ENCODE measurements at regions of chr2 and their contacts with region 1.

Region 1: DNA sequence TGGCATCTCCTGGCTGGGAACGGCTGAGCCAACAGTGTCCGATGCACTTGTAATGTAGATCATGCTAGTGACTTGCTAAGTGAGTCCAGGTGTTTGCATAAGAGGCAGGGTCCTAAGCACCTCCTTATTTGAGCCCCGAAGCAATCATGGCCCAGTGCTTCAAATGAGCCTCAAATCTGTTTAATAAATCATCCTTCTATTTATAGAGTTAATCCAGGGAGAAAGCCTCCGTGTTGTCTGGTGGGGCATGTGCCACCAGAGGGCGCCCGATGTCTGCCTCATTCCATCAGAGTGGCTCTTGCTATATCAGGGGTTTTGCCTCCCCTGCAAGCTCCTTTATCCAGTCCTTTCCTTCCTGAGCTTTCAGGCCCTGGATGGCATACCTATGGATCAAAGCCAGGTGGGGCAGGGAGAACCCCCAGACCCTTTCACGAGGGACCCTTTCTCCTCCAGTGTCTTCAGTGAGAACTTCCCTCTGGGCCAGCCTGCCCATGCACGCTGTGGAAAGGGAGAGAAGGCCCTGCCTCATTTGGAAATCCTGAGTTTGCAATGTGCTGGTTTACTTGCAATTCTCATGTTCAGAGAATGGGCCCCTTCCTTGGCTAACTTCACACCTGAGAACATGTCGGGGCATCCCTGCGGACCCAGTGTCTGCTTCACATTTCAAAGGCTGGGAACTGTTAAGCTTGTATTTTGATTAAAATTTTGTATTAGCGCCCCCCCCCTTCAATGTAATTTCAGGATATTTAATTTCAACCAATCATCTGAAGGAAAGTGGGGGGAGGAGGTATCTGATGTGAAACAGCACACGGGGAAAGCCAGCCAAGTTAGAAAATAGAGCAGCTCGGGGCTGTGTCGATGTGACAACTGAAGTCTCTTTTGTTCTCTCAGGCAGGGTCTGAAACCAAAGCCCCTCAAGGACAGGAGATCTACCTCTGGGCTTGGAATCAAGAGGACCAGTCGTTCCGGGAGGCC is 39.7 kb downstream of the RDH14 start:
- DNase-seq: peak; percentile 49 to 81
- ATAC-seq: peak; percentile 85 to 96
- H3K4me3 ChIP-seq: peak overlapping the region in 2 of 4 donors; percentile 4 to 26
- H3K27ac ChIP-seq: peak overlapping the region; percentile 13 to 52 (median 38)
- H3K4me1 ChIP-seq: peaks cover 14 to 39% of the 10 kb centered on the region in 2 donors
- H3K27me3 ChIP-seq: no peaks in the 10 kb centered on the region
- CTCF ChIP-seq: peak; percentile 76 to 90 (median 88)
- POLR2A ChIP-seq: no peak

Region 2: GRCh38 chr2:18398833-18399232 is 121.9 kb before region 1 on chr2:
- in situ Hi-C with region 1: no loop called
- intact Hi-C with region 1: no loop called
- DNase-seq: peak; percentile 20 to 54
- ATAC-seq: peak; percentile 58 to 61
- H3K4me3 ChIP-seq: no peak overlapping the region
- H3K27ac ChIP-seq: no peak overlapping the region
- H3K4me1 ChIP-seq: no peaks in the 10 kb centered on the region
- H3K27me3 ChIP-seq: no peaks in the 10 kb centered on the region
- CTCF ChIP-seq: no peak
- POLR2A ChIP-seq: no peak

Region 3: DNA sequence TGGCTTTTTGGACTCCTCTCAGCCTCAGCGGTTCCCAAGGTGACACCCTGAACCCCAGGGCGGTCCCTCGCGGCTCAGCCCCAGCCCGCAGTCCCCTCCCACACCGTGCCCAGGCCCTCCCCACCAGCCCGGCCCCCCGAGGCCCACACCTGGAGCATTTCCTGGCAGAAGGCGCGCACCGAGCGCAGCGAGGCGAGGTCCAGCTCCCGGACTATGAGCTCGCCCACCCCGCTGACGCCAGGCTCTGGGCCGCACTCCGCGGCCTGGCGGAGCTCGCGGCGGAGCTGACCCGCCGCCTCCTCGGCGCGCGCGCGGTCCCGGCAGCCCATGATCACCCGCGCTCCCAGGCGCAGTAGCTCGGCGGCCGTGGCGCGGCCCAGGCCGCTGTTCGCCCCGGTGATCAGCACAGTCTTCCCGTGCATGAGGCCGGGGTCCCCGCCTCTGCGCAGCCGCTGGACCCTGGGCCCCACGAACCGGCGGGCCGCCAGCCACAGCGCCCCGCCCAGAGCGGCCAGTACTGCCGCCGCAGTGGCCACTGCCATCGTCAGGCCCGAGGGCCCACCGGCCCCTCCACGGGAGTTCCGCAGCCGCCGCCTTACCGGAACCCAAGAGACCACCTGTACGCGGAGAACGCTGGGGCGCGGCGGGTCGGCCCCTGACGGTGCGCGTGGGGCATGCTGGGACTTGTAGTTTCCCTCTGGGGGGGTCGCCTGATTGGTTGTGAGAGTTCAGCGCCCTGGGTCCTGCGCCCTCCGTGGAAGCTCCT is 39.5 kb after region 1 on chr2 and contains the start of gene RDH14:
- in situ Hi-C with region 1: no loop called
- intact Hi-C with region 1: loop called (anchors 2 kb)
- DNase-seq: peak; percentile 94 to 96
- ATAC-seq: peak; percentile 94 to 96
- H3K4me3 ChIP-seq: peak within 1 kb of the TSS; percentile 65 to 83 (median 74)
- H3K27ac ChIP-seq: peak within 1 kb of the TSS; percentile 89 to 97 (median 92)
- H3K4me1 ChIP-seq: peaks cover 39 to 42% of the 10 kb centered on the region in 2 donors
- H3K27me3 ChIP-seq: no peaks in the 10 kb centered on the region
- CTCF ChIP-seq: no peak
- POLR2A ChIP-seq: peak; percentile 81 to 84
- total RNA-seq, gene RDH14: 24.6 to 55.4 (median 49.8) TPM

Region 4: GRCh38 chr2:18749912-18750526 is 229.3 kb after region 1 on chr2:
- in situ Hi-C with region 1: no loop called
- intact Hi-C with region 1: loop called (anchors 10 kb)
- DNase-seq: no peak
- ATAC-seq: peak; percentile 41 to 69
- H3K4me3 ChIP-seq: no peak overlapping the region
- H3K27ac ChIP-seq: peak overlapping the region in 3 of 4 donors; percentile 17 to 47 (median 28)
- H3K4me1 ChIP-seq: peaks cover 26 to 34% of the 10 kb centered on the region in 2 donors
- H3K27me3 ChIP-seq: no peaks in the 10 kb centered on the region
- CTCF ChIP-seq: peak; percentile 60 to 78 (median 73)
- POLR2A ChIP-seq: no peak

Measured in gastrocnemius medialis (tissue), 4 donors.